Mammary epithelial cell (primary cell): ENCODE measurements at regions of chr14 and their contacts with region 1.

Region 1: DNA sequence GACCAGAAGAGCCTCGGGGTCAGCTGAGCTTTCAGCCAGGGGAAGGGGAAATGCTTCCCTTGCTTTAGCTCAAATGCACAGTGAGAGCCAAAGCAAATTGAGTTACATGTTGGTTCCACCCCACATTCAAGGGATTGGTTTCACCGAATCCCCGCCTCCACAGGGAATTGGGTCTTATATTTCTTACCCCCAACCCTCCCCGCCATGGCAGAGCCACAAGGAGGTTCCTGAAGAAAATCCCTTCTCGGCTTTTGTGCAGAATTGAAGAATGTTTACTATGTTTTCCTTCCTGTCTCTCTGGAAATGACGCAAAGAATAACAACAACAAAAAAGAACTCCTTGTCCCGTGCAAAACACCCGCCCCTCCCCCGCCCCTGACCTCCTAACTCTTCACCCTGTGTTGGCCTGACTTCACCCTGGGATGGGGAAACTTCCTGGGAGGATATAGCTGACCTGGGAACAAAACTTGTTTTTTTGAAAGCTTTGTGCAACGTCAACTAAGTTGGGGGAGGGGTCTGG is 21.9 kb upstream of the CIPC start:
- DNase-seq: no peak
- H3K4me3 ChIP-seq: no peak overlapping the region
- H3K27ac ChIP-seq: no peak overlapping the region
- H3K4me1 ChIP-seq: peaks cover 16% of the 10 kb centered on the region
- H3K27me3 ChIP-seq: no peaks in the 10 kb centered on the region
- CTCF ChIP-seq: no peak

Region 2: DNA sequence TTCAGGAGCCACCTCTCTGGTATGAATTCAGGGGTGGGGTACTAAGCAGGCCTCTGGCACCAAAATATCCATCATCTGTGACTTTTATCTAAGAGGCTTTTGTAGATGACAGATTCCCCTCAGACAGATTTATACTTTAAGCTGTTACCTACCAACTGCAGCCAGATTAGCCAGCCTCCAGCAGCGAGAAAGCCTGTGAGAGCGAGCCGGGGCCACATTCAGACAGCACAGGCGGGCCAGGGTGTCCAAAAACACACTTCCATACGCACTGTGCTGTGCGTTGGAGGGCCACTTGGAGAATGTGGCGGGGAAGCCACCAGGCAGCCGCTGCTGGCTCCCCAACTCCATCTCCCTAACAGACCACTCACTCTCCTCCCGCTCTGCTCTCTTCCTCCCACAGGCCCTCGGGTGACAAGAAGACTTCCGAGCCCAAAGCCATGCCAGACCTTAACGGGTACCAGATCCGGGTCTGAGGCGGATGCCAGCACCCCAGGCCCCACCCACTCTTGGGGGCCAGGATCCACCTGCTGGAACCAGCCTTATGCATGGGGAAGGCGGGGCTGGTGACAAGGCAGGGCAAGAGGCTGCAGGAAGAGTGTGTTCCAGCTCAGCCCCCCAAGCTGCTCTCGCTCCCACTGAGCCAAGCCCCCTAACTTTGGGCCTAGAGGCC is 297.5 kb before region 1 on chr14:
- CTCF ChIA-PET with region 1: no interaction called
- dilution Hi-C with region 1: no loop called
- in situ Hi-C with region 1: no loop called
- intact Hi-C with region 1: loop called (anchors 2 kb)
- DNase-seq: no peak
- H3K4me3 ChIP-seq: no peak overlapping the region
- H3K27ac ChIP-seq: no peak overlapping the region
- H3K4me1 ChIP-seq: peaks cover 19% of the 10 kb centered on the region
- H3K27me3 ChIP-seq: no peaks in the 10 kb centered on the region
- CTCF ChIP-seq: no peak

Region 3: DNA sequence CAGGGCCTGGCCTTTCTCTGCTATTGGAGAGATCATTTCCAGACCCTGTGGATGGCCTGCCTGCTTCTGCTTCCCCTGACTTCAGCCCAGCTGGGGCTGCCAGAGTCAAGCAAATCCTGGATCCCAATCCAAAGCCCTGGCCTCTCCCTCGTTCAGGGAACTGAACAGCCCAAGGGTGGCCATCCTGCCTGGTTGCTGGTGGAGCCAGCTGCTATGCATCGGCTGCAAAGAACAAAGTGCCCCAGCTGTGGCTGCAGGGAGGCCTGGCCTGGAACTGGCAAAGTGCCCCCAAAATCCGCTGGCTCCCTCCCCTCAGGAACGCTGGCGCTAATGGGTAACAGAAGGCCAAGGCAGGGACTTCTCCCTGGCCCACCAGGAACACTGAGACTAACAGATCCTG is 193.5 kb before region 1 on chr14:
- CTCF ChIA-PET with region 1: no interaction called
- dilution Hi-C with region 1: no loop called
- in situ Hi-C with region 1: loop called in 1 of 2 experiments (anchors 5 kb)
- intact Hi-C with region 1: no loop called
- DNase-seq: no peak
- H3K4me3 ChIP-seq: no peak overlapping the region
- H3K27ac ChIP-seq: no peak overlapping the region
- H3K4me1 ChIP-seq: no peaks in the 10 kb centered on the region
- H3K27me3 ChIP-seq: no peaks in the 10 kb centered on the region
- CTCF ChIP-seq: no peak

Region 4: DNA sequence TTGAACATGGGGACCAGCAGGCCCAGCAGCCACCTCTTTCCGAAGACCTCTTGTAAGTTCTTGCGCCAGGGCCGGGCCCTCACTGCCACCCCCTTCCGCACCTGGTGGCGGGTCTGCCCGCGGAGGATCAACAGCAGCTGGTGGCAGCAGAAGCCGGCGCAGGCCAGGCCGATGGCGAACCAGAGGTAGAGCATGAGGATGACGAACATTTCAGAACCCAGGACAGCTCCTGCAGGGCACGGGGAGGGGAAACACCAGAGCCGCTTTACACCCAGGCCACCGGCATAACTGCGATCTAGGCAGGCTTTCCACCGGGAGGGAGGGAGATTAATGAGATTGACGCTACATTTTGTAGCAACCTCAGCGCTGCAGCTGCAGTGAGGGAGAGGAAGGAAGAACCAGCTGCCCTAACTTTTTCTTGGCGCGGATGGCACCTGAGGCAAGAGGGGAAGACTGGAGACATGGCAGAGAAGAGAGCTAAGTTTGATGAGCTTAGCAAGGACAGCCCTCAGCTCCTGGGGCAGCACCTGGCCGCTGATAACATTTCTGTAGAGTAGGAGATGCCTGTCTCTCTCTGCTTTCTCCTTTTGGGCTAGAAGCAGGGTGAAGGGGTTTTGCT is 57.7 kb after region 1 on chr14:
- CTCF ChIA-PET with region 1: no interaction called
- dilution Hi-C with region 1: loop called (anchors 5 kb)
- in situ Hi-C with region 1: no loop called
- intact Hi-C with region 1: no loop called
- DNase-seq: peak; percentile 60
- H3K4me3 ChIP-seq: no peak overlapping the region
- H3K27ac ChIP-seq: no peak overlapping the region
- H3K4me1 ChIP-seq: no peaks in the 10 kb centered on the region
- H3K27me3 ChIP-seq: peaks cover 3% of the 10 kb centered on the region
- CTCF ChIP-seq: no peak